ENCODE measurements at regions of chr2 and their contacts with region 1.

Region 1: DNA sequence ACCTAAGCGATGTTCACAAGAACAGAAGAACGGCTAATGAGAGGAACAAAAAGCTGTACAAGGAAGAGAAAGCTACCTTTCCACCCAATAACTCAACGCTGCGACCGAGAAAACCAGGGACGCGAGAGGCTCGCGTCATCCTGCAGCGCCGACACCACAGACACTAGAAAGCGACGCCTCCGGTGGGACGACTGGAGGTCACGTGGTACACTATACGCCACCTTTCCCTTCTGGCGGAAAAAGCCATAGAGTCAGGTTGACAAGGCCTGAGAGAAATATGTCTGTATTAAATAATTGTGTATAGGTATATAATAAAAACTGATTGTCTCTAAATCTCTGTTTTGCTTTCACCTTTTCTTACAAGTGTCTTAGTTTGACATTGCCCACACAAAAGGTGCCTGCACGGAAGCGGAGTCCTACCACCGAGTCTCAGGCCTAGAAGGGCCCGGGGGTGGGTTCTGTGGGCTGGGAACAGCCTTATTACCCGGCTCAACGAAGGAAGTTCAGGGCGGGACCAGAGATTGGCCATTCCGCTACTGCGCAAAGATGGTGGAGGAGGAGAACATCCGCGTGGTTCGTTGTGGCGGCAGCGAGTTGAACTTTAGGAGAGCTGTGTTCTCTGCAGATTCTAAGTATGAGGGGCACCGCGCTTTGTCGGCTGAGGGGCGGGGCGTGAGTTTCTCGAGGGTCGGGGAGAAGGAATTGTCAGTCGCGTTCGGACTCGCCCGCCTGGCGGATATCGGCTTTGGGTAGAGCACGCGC is at the start of gene WDR75:
- DNase-seq: peak; percentile 87 to 96
- ATAC-seq: peak; percentile 94 to 99 (median 94)
- H3K4me3 ChIP-seq: peak within 1 kb of the TSS; percentile 96
- H3K4me3 Mint-ChIP-seq: peak within 1 kb of the TSS; percentile 96
- H3K27ac ChIP-seq: peak within 1 kb of the TSS; percentile 99
- H3K27ac Mint-ChIP-seq: peak within 1 kb of the TSS; percentile 96 to 98
- H3K4me1 ChIP-seq: peaks cover 5% of the 10 kb centered on the region
- H3K4me1 Mint-ChIP-seq: peaks cover 5 to 7% of the 10 kb centered on the region in 2 donors
- H3K27me3 ChIP-seq: no peaks in the 10 kb centered on the region
- H3K27me3 Mint-ChIP-seq: no peaks in the 10 kb centered on the region
- CTCF ChIP-seq: no peak
- total RNA-seq, gene WDR75: 31.4 to 38.5 (median 32.3) TPM

Region 2: GRCh38 chr2:189549449-189549832 is 108.3 kb after region 1 on chr2:
- intact Hi-C with region 1: no loop called
- DNase-seq: no peak
- ATAC-seq: no peak
- H3K4me3 ChIP-seq: no peak overlapping the region
- H3K4me3 Mint-ChIP-seq: no peak overlapping the region
- H3K27ac ChIP-seq: no peak overlapping the region
- H3K27ac Mint-ChIP-seq: no peak overlapping the region
- H3K4me1 ChIP-seq: no peaks in the 10 kb centered on the region
- H3K4me1 Mint-ChIP-seq: no peaks in the 10 kb centered on the region
- H3K27me3 ChIP-seq: no peaks in the 10 kb centered on the region
- H3K27me3 Mint-ChIP-seq: peaks cover 0 to 4% of the 10 kb centered on the region in 2 donors
- CTCF ChIP-seq: no peak

Region 3: DNA sequence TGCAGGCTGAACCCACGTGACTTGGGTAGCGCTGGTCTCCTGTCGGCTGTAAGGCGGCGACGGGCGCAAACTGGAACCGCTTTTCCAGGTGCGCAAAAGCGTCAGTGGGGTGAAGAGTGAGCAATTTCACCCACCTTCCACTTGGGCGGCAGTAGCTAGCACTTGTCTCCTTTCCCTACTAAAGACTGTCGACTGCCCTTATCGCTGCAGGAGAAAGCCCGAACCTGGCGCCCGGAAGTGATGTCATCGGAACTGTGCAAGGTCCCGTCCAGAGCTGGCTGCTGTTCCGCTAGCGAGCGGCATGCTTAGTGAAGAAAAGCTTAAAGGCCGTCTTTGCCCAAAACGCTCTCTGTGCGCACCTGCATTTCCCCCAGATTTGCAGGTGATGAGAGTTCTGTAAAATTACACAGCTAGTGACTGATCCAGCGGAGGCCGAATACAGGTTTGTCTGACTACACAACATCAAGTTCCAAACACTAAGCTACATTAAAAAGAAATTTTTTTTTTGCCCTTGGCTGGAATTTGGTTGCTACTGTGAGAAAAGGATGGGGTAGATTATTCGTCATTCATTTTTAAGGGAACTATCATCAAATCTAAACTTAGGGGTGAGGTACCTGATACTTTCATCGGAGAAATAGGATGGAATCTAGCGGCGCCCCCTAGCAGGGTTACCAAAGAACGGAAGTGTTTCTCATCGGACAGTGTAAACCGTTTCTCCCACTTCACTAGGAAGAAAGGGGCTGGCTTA is 321.6 kb after region 1 on chr2 and contains the start of gene OSGEPL1:
- intact Hi-C with region 1: loop called (anchors 2 kb)
- DNase-seq: peak; percentile 85 to 96
- ATAC-seq: peak; percentile 91 to 95 (median 93)
- H3K4me3 ChIP-seq: peak within 1 kb of the TSS; percentile 70
- H3K4me3 Mint-ChIP-seq: peak within 1 kb of the TSS; percentile 99
- H3K27ac ChIP-seq: peak within 1 kb of the TSS; percentile 86
- H3K27ac Mint-ChIP-seq: peak within 1 kb of the TSS; percentile 95 to 98
- H3K4me1 ChIP-seq: no peaks in the 10 kb centered on the region
- H3K4me1 Mint-ChIP-seq: peaks cover 6 to 7% of the 10 kb centered on the region in 2 donors
- H3K27me3 ChIP-seq: no peaks in the 10 kb centered on the region
- H3K27me3 Mint-ChIP-seq: no peaks in the 10 kb centered on the region
- CTCF ChIP-seq: peak; percentile 60
- total RNA-seq, gene OSGEPL1: 5.6 to 10.2 (median 8.5) TPM

Measured in natural killer cell (primary cell).